ENCODE measurements at regions of chr3 and their contacts with region 1.

Region 1: DNA sequence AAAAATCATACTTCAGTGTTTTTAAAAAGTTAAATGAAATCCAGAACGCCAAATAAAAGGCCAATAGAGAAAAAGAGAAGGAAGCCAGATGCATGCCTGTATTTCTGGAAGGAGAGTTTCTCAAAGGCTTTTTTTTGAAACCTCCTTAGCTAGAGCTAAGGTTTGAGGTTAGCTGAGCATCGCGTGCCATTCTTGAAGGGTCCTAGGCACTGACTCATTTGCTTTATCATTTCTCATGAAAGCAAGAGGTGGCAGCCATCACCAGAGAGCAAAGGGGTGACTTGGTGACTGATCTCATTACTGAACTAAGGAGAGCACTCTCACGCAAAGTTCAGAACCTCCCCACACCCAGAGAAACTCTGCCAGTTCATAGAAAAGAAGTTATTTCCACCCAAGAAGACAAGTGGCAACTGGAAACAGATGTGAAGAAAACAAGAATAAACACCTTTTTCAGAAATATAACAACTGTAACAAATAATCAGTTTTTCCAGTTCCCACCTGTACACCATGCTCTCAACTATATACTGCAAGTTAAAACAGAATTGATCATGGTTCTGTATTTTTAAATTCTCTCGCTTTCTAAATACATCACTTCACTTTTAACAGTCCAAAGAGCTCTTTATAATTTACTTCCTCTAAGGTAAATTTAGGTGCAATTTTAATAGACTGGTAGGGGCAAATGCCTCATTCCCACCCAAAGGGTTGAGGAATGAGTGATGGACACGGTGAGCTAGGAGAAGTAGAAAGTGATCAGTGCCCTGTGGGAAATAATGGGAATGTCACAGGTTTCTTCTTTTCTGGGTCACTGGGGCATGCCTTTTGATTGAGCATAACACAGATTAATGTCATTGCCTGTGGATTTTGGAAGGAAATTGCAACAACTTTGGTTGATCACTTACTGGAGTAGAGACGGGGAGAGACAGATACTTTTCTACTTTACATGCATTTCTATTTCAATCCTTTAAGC is 24.7 kb downstream of the GPR15 start:
- DNase-seq: peak in 3 of 5 donors; percentile 6 to 90 (median 13)
- H3K4me3 ChIP-seq: peak overlapping the region; percentile 24
- H3K4me3 Mint-ChIP-seq: peak overlapping the region; percentile 52 to 80 (median 69)
- H3K27ac ChIP-seq: peak overlapping the region; percentile 52
- H3K27ac Mint-ChIP-seq: peak overlapping the region; percentile 72 to 97 (median 94)
- H3K4me1 ChIP-seq: peaks cover 63% of the 10 kb centered on the region
- H3K4me1 Mint-ChIP-seq: peaks cover 77 to 98% (median 94%) of the 10 kb centered on the region in 3 donors
- H3K27me3 ChIP-seq: no peaks in the 10 kb centered on the region
- H3K27me3 Mint-ChIP-seq: no peaks in the 10 kb centered on the region

Region 2: GRCh38 chr3:98445949-98446406 is 110.5 kb before region 1 on chr3:
- CTCF ChIA-PET with region 1: no interaction called
- POLR2A ChIA-PET with region 1: no interaction called
- DNase-seq: no peak
- H3K4me3 ChIP-seq: no peak overlapping the region
- H3K4me3 Mint-ChIP-seq: no peak overlapping the region
- H3K27ac ChIP-seq: no peak overlapping the region
- H3K27ac Mint-ChIP-seq: no peak overlapping the region
- H3K4me1 ChIP-seq: no peaks in the 10 kb centered on the region
- H3K4me1 Mint-ChIP-seq: peaks cover 7 to 13% (median 11%) of the 10 kb centered on the region in 3 donors
- H3K27me3 ChIP-seq: no peaks in the 10 kb centered on the region
- H3K27me3 Mint-ChIP-seq: peaks cover 4 to 5% of the 10 kb centered on the region in 2 donors

Region 3: GRCh38 chr3:98573181-98573728 is 16.8 kb after region 1 on chr3:
- CTCF ChIA-PET with region 1: interaction called, 35 read pairs
- POLR2A ChIA-PET with region 1: interaction called, 66 read pairs
- DNase-seq: peak in 1 of 5 donors; percentile 37
- H3K4me3 ChIP-seq: no peak overlapping the region
- H3K4me3 Mint-ChIP-seq: peak overlapping the region in 5 of 7 donors; percentile 19 to 67 (median 54)
- H3K27ac ChIP-seq: no peak overlapping the region
- H3K27ac Mint-ChIP-seq: peak overlapping the region; percentile 47 to 95 (median 80)
- H3K4me1 ChIP-seq: peaks cover 2% of the 10 kb centered on the region
- H3K4me1 Mint-ChIP-seq: peaks cover 31 to 63% (median 56%) of the 10 kb centered on the region in 3 donors
- H3K27me3 ChIP-seq: no peaks in the 10 kb centered on the region
- H3K27me3 Mint-ChIP-seq: no peaks in the 10 kb centered on the region

Measured in CD8-positive, alpha-beta memory T cell (primary cell).